Heart left ventricle (tissue), 16 donors: ENCODE measurements at regions of chr3 and their contacts with region 1.

Region 1: DNA sequence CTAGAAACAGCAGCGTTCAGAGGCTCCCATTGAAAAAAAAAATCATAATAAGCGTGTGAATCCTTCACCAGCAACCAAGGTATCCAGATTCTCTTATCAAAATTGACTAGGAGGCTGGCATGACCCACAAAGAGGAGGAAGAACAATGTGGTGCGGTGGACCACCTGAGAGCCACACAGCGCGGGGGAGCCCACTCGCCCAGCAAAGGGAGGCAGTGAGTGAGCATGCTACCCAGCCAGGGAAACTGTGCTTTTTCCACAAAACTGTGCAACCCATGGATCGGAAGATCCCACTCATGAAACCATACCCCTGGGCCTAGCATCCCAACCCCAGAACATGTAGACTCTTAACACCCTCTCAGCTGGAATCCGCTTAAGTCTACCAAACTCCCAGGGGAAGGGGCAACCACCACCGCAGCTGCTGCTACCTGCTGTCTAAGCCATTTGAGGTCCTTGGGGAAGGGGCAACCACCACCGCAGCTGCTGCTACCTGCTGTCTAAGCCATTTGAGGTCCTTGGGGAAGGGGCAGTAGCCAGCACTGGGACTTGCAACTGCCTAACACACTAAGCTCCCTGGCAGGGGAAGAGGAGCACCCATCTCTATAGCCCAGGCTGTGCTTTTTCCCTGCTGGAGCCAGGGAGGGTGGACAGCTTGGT is 102.9 kb upstream of the CLDN18 start:
- DNase-seq: peak in 1 of 5 donors; percentile 37
- ATAC-seq: no peak
- H3K4me3 ChIP-seq: no peak overlapping the region
- H3K27ac ChIP-seq: no peak overlapping the region
- H3K4me1 ChIP-seq: no peaks in the 10 kb centered on the region
- H3K27me3 ChIP-seq: no peaks in the 10 kb centered on the region
- CTCF ChIP-seq: no peak
- POLR2A ChIP-seq: no peak

Region 2: DNA sequence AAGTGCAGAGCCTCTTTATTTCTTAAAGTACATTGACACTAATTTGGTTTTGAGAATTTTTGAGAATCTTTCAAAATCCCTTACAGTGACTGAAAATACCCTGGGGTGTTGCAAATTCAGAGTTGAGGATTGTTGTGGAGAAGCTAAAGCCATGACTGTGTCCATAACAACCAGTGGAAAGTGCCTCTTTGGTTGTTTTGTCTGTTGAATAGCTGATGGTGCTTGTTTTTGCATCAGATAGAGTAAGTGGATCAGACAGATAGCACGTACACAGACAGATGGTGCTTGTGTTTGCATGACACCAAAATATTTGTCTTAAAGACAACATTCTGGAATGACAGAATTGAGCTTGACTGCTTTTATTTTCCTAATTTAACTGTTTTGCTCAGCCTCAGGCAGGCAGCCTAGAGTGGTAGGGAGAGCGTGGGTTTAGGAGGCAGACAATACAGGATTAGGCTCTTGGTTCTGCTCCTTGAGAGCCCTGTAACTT is 684.3 kb before region 1 on chr3:
- intact Hi-C with region 1: loop called in 1 of 10 experiments (anchors 5 kb)
- DNase-seq: no peak
- ATAC-seq: no peak
- H3K4me3 ChIP-seq: no peak overlapping the region
- H3K27ac ChIP-seq: no peak overlapping the region
- H3K4me1 ChIP-seq: no peaks in the 10 kb centered on the region
- H3K27me3 ChIP-seq: peaks cover 0 to 3% (median 0%) of the 10 kb centered on the region in 9 donors
- CTCF ChIP-seq: no peak
- POLR2A ChIP-seq: no peak